HCT116 (cell line): ENCODE measurements at regions of chr6 and their contacts with region 1.

Region 1: GRCh38 chr6:593139-593906 is 63.6 kb downstream of the HUS1B start:
- DNase-seq: peak; percentile 44
- ATAC-seq: peak; percentile 65
- H3K4me3 ChIP-seq: no peak overlapping the region
- H3K27ac ChIP-seq: no peak overlapping the region
- H3K4me1 ChIP-seq: no peaks in the 10 kb centered on the region
- H3K27me3 ChIP-seq: no peaks in the 10 kb centered on the region
- CTCF ChIP-seq: peak; percentile 49 to 75 (median 63); a peak in 5 of 6 replicates
- POLR2A ChIP-seq: no peak
- RAD21 ChIP-seq: peak; percentile 80

Region 2: GRCh38 chr6:188821-189655 is 404.3 kb before region 1 on chr6:
- CTCF ChIA-PET with region 1: no interaction called
- POLR2A ChIA-PET with region 1: no interaction called
- RAD21 ChIA-PET with region 1: no interaction called
- intact Hi-C with region 1: loop called (anchors 2 kb)
- DNase-seq: peak; percentile 72
- ATAC-seq: peak; percentile 98
- H3K4me3 ChIP-seq: no peak overlapping the region
- H3K27ac ChIP-seq: no peak overlapping the region
- H3K4me1 ChIP-seq: no peaks in the 10 kb centered on the region
- H3K27me3 ChIP-seq: no peaks in the 10 kb centered on the region
- CTCF ChIP-seq: peak; percentile 93 to 95 (median 95)
- POLR2A ChIP-seq: no peak
- RAD21 ChIP-seq: peak; percentile 95

Region 3: GRCh38 chr6:722077-722524 is 128.8 kb after region 1 on chr6:
- CTCF ChIA-PET with region 1: interaction called, 5 read pairs
- POLR2A ChIA-PET with region 1: no interaction called
- RAD21 ChIA-PET with region 1: no interaction called
- intact Hi-C with region 1: loop called (anchors 5 kb)
- DNase-seq: peak; percentile 61
- ATAC-seq: peak; percentile 97
- H3K4me3 ChIP-seq: no peak overlapping the region
- H3K27ac ChIP-seq: no peak overlapping the region
- H3K4me1 ChIP-seq: peaks cover 0 to 4% of the 10 kb centered on the region in 2 experiments; a peak in 2 of 4 replicates
- H3K27me3 ChIP-seq: no peaks in the 10 kb centered on the region
- CTCF ChIP-seq: peak; percentile 69 to 94 (median 93)
- POLR2A ChIP-seq: no peak
- RAD21 ChIP-seq: peak; percentile 66

Region 4: DNA sequence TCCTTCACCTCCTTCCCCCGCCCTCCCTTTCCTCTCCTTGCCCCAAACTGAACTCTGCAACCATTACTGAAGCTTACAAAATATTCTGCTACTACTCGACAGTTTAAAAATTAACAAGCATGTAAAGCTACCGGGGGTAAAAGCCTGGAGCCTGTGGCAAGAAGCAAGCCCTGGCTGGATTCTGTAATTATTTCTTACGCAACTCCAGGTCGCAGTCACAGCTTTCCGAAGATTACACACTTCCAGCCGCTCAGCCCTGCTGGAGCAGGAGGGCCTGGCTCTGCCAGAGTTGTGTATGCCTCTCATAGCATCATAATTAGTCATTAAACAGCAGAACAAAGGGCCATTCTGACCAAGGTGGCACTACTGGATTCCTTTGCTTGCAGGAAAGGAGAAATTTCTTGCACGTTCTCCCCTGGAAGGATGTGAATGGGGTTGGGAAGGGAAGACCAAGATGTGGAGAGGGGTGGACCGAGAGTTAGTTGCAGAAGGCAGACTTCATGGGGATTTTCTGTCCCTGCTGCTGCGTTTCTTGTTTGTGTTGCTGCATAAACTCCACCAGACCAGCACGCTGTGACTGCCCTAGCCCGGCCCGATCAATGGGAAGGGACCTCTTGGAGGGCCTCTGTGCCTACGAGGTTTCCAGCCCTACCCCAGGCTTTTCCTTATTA is 742.2 kb after region 1 on chr6:
- CTCF ChIA-PET with region 1: interaction called, 9 read pairs
- POLR2A ChIA-PET with region 1: no interaction called
- RAD21 ChIA-PET with region 1: interaction called in 1 of 2 experiments, 3 read pairs
- intact Hi-C with region 1: loop called (anchors 5 kb)
- DNase-seq: peak; percentile 87
- ATAC-seq: peak; percentile 92
- H3K4me3 ChIP-seq: peak overlapping the region; percentile 10 to 40; a peak in 3 of 4 replicates
- H3K27ac ChIP-seq: peak overlapping the region; percentile 63
- H3K4me1 ChIP-seq: peaks cover 9 to 33% of the 10 kb centered on the region in 2 experiments; a peak in 3 of 4 replicates
- H3K27me3 ChIP-seq: no peaks in the 10 kb centered on the region
- CTCF ChIP-seq: no peak
- POLR2A ChIP-seq: no peak
- RAD21 ChIP-seq: peak; percentile 48

Region 5: GRCh38 chr6:1396952-1397868 is 803.9 kb after region 1 on chr6:
- CTCF ChIA-PET with region 1: interaction called, 7 read pairs
- POLR2A ChIA-PET with region 1: no interaction called
- RAD21 ChIA-PET with region 1: no interaction called
- intact Hi-C with region 1: loop called (anchors 1 kb)
- DNase-seq: peak; percentile 54
- ATAC-seq: peak; percentile 90
- H3K4me3 ChIP-seq: peak overlapping the region in 1 of 2 experiments; percentile 15; a peak in 1 of 4 replicates
- H3K27ac ChIP-seq: no peak overlapping the region
- H3K4me1 ChIP-seq: 0 out of 4 replicates have a peak, but pooled peaks cover 0 to 3% of the 10 kb centered on the region in 2 experiments
- H3K27me3 ChIP-seq: no peaks in the 10 kb centered on the region
- CTCF ChIP-seq: peak; percentile 78 to 98 (median 97)
- POLR2A ChIP-seq: no peak
- RAD21 ChIP-seq: peak; percentile 81